ENCODE measurements at regions of chr13 and their contacts with region 1.

Region 1: GRCh38 chr13:42312817-42313431 is 41.0 kb downstream of the AKAP11 start:
- DNase-seq: no peak
- H3K4me3 ChIP-seq: no peak overlapping the region
- H3K27ac ChIP-seq: no peak overlapping the region
- H3K4me1 ChIP-seq: no peaks in the 10 kb centered on the region
- H3K27me3 ChIP-seq: no peaks in the 10 kb centered on the region
- CTCF ChIP-seq: no peak

Region 2: GRCh38 chr13:42110410-42111155 is 202.3 kb before region 1 on chr13:
- CTCF ChIA-PET with region 1: no interaction called
- POLR2A ChIA-PET with region 1: no interaction called
- intact Hi-C with region 1: no loop called
- DNase-seq: peak in 1 of 2 experiments; percentile 45
- H3K4me3 ChIP-seq: no peak overlapping the region
- H3K27ac ChIP-seq: no peak overlapping the region
- H3K4me1 ChIP-seq: peaks cover 19% of the 10 kb centered on the region
- H3K27me3 ChIP-seq: no peaks in the 10 kb centered on the region
- CTCF ChIP-seq: peak; percentile 82

Region 3: DNA sequence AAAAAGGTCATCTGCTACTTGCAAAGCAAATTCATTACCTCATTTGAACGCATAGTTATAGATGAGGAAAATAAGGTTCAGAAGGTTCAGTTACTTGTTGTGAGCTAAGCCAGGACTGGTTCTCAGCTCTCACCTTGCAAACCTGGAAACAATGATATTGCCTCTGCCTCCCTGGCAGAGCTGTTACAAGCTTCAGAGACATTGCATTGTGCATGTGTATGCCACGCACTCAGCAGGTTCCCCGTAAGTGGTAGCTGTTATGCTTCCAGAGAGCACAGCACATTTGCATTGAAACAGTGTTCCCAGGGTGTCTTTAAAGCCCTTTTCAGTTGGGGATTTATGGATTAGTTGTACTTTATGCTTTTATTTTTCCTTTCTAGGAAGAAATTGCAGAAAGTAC is 183.9 kb before region 1 on chr13:
- CTCF ChIA-PET with region 1: no interaction called
- POLR2A ChIA-PET with region 1: no interaction called
- intact Hi-C with region 1: no loop called
- DNase-seq: no peak
- H3K4me3 ChIP-seq: no peak overlapping the region
- H3K27ac ChIP-seq: no peak overlapping the region
- H3K4me1 ChIP-seq: peaks cover 4% of the 10 kb centered on the region
- H3K27me3 ChIP-seq: no peaks in the 10 kb centered on the region
- CTCF ChIP-seq: no peak

Region 4: GRCh38 chr13:42258747-42259146 is 54.2 kb before region 1 on chr13:
- CTCF ChIA-PET with region 1: no interaction called
- POLR2A ChIA-PET with region 1: no interaction called
- intact Hi-C with region 1: no loop called
- DNase-seq: no peak
- H3K4me3 ChIP-seq: no peak overlapping the region
- H3K27ac ChIP-seq: no peak overlapping the region
- H3K4me1 ChIP-seq: no peaks in the 10 kb centered on the region
- H3K27me3 ChIP-seq: no peaks in the 10 kb centered on the region
- CTCF ChIP-seq: no peak

Region 5: DNA sequence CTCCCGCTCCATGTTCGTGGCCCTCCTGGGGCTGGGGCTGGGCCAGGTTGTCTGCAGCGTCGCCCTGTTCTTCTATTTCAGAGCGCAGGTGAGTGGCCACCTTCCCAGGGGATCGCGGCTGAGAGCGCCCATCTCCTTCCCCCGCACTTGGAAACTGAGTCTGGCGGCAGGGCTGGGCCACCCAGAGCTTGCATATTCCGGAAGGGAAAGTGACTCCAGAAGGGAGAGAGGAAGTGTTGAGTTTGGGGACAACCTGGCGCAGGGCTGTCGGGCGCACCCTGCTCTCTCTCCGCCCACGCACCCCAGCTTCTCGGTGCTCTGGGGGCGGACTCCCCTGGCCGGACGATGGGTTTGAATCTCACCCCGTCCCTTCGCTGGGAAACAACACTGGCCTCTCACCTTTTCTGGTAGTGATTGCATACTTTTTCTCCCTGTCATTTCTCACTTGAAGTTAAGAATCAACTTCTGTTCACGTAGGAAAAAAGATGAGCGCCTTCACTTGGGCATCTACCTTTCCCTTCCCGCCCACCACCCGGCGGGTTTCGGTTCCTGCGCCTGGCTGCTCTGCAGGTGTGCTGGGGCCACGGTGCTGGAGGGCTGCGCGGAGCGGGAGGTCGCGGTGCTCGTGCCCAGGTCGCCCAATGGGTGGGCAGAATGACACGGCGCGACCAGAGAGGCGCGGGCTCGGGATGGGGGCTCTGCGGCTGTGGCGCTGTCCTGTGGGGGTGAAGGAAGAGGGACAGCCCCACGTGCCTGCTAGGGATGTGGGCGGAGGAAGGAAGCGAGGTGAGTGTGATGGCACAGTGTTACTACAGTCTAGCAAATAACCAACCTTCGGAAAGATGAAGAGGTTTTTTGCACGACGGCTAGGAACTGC is 261.7 kb after region 1 on chr13:
- CTCF ChIA-PET with region 1: no interaction called
- POLR2A ChIA-PET with region 1: interaction called, 17 read pairs
- intact Hi-C with region 1: no loop called
- DNase-seq: peak in 1 of 2 experiments; percentile 3
- H3K4me3 ChIP-seq: peak overlapping the region; percentile 42; the same call in 1 of the 2 replicates
- H3K27ac ChIP-seq: no peak overlapping the region
- H3K4me1 ChIP-seq: no peaks in the 10 kb centered on the region
- H3K27me3 ChIP-seq: peaks cover 17% of the 10 kb centered on the region; the same call in 1 of the 2 replicates
- CTCF ChIP-seq: no peak

Measured in PC-9 (cell line).